ENCODE measurements at regions of chr19 and their contacts with region 1.

Region 1: DNA sequence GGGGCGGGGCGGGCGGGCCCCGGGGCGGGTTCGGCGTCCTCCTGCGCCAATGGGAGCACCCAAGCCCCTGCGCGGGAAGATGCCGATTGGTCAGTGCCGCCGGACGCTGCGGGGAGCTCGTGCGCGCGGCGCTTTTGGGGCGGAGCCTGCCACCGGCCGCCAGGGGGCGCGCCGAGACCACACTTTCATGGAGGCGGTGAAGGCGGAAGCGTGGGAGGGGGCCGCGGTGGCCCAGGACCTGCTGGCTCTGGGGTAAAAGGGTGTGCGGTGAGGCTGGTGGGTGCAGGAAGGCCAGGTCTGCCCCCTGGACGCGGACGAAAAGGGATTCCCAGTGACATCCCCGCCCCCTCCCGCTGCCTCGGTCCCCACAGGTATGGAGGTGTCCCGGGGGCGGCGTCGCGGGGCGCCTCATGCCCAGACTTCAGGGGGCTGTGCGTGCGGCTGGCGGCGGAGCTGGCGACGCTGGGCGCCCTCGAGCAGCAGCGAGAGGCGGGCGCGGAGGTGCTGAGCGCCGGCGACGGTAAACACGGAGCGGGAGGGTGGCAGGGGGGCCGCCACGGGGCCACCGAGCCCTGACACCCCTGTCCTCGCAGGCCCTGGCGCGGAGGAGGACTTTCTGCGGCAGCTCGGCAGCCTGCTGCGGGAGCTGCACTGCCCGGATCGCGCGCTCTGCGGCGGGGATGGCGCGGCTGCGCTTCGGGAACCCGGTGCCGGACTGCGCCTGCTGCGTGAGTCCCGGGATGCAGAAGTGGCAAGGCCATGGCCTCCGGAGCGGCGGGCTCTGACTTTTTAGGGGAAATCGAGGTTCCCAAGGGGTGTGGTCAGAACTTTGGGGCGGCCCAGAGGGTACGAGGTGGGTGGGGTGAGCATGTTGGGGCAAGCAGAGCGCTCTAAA is at the start of gene FAM98C:
- DNase-seq: peak; percentile 96
- ATAC-seq: peak; percentile 99
- H3K4me3 Mint-ChIP-seq: peak within 1 kb of the TSS; percentile 84
- H3K27ac Mint-ChIP-seq: peak within 1 kb of the TSS; percentile 93
- H3K4me1 Mint-ChIP-seq: peaks cover 26% of the 10 kb centered on the region
- H3K27me3 Mint-ChIP-seq: peaks cover 5% of the 10 kb centered on the region
- total RNA-seq, gene FAM98C: 21.0 to 25.9 TPM

Region 2: GRCh38 chr19:38351865-38352395 is 51.3 kb before region 1 on chr19:
- CTCF ChIA-PET with region 1: no interaction called
- POLR2A ChIA-PET with region 1: no interaction called
- DNase-seq: no peak
- ATAC-seq: peak; percentile 15
- H3K4me3 Mint-ChIP-seq: no peak overlapping the region
- H3K27ac Mint-ChIP-seq: no peak overlapping the region
- H3K4me1 Mint-ChIP-seq: no peaks in the 10 kb centered on the region
- H3K27me3 Mint-ChIP-seq: peaks cover 4% of the 10 kb centered on the region

Region 3: DNA sequence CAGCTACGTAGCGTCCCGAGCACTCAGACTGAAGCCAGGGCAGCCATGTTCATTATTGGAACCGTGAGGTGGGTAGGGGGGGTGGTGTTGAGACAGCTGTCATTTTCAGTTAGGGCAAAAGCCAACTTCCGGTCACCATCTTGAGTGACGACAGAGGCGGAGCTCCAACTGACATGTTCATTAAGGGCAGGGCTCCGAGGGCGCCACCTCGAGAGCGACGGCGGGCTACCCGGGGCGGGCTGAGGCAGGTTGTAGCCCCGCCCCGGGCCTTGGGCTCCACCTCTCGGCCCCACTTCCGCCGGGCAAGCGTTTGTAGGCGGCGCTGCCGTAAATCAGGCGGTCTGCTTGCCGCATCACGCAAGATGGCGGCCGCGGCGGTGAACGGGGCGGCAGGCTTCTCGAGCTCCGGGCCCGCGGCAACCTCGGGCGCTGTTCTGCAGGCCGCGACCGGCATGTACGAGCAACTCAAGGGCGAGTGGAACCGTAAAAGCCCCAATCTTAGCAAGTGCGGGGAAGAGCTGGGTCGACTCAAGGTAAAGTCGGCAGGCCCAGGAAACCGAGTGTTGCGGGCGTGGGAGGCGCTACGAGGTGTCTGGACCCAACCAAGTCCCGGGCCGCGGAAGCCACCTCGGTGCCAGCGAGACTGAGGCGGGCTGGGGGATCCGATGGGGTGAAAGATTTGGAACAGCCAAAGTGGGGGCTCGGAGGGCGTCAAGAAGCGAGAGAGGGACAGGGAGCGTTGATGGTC is 28.6 kb before region 1 on chr19 and contains the start of gene PSMD8:
- CTCF ChIA-PET with region 1: interaction called, 32 read pairs
- POLR2A ChIA-PET with region 1: interaction called, 9 read pairs
- DNase-seq: peak; percentile 99
- ATAC-seq: peak; percentile 98
- H3K4me3 Mint-ChIP-seq: peak within 1 kb of the TSS; percentile 100
- H3K27ac Mint-ChIP-seq: peak within 1 kb of the TSS; percentile 99
- H3K4me1 Mint-ChIP-seq: peaks cover 22% of the 10 kb centered on the region
- H3K27me3 Mint-ChIP-seq: peaks cover 4% of the 10 kb centered on the region
- total RNA-seq, gene PSMD8: 173 to 187 TPM

Region 4: GRCh38 chr19:38417544-38418506 is 14.6 kb after region 1 on chr19:
- CTCF ChIA-PET with region 1: interaction called, 25 read pairs
- POLR2A ChIA-PET with region 1: interaction called, 7 read pairs
- DNase-seq: peak; percentile 79
- ATAC-seq: peak; percentile 85
- H3K4me3 Mint-ChIP-seq: peak overlapping the region; percentile 74
- H3K27ac Mint-ChIP-seq: peak overlapping the region; percentile 78
- H3K4me1 Mint-ChIP-seq: peaks cover 22% of the 10 kb centered on the region
- H3K27me3 Mint-ChIP-seq: peaks cover 4% of the 10 kb centered on the region

Region 5: DNA sequence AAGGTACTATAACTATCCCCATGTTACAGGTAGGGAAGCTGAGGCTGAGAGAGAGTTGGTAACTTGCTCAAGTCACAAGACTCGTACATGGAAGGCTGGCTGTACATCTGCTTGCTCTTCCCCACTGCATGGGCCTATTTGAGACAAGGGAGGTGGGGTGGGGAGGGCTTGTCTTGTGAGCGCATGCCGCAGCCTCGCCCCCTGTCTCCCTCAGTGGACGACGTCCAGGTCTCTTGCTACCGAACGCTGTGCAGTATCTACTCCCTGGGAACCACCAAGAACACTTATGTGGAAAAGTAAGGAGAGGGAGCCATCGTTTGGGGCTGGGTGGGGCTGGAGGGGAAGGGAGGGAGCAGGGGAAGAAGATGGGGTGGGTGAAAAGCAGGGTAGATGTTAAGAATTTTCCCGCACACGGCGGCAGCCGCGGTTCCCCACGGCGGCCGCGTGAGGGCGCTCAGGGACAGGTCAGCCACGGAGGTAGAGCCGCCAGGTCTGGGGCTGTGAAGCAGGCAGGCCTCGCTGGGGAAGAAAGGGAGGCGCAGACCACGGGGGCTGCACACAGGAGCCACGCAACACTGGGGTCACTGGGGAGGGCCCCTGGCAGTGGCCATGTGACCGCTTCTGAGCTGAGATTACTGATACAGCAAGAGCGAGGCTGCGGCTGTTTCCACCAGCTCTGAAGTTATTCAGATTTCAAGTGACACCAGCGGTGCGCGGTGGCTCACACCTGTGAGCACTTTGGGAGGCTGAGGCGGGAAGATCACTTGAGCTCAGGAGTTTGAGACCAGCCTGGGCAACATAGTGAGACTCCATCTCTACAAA is 111.8 kb after region 1 on chr19:
- CTCF ChIA-PET with region 1: interaction called, 46 read pairs
- POLR2A ChIA-PET with region 1: interaction called, 3 read pairs
- DNase-seq: peak; percentile 81
- ATAC-seq: peak; percentile 81
- H3K4me3 Mint-ChIP-seq: peak overlapping the region; percentile 8
- H3K27ac Mint-ChIP-seq: peak overlapping the region; percentile 49
- H3K4me1 Mint-ChIP-seq: peaks cover 30% of the 10 kb centered on the region
- H3K27me3 Mint-ChIP-seq: peaks cover 22% of the 10 kb centered on the region

Region 6: DNA sequence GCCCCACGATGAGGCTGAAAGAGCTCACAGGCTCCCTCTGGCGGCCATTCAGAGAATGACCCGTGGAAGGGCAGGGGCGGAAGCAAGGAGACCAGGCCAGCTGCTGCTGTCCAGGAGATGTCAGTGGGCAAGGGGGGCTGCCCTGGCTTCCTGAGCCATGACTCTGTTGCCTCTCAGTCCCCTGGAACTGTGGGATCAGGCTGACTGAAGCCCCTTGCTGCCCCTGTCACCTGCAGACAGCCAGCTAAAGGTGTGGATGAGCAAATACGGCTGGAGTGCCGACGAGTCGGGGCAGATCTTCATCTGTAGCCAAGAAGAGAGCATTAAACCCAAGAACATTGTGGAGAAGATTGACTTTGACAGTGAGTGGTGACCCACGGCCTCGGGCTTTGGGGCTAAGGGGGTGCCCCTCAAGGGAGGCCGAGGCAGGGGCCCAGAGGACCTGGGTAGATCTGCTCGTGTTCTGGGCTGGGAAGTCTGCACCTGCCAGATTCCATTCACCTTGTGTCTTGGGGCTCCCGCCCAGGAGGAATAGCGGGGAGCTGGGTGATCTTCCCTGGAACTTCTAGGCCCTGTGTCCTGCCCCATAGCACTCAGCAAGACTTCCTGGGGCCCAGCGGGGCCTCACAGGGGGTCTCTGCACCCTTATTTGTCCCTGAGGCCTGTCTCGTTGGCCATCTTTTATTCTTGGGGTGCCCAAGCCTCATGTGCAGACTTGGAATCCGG is 231.7 kb after region 1 on chr19:
- CTCF ChIA-PET with region 1: interaction called, 57 read pairs
- POLR2A ChIA-PET with region 1: no interaction called
- DNase-seq: peak; percentile 81
- ATAC-seq: peak; percentile 21
- H3K4me3 Mint-ChIP-seq: no peak overlapping the region
- H3K27ac Mint-ChIP-seq: peak overlapping the region; percentile 83
- H3K4me1 Mint-ChIP-seq: peaks cover 36% of the 10 kb centered on the region
- H3K27me3 Mint-ChIP-seq: no peaks in the 10 kb centered on the region

Region 7: DNA sequence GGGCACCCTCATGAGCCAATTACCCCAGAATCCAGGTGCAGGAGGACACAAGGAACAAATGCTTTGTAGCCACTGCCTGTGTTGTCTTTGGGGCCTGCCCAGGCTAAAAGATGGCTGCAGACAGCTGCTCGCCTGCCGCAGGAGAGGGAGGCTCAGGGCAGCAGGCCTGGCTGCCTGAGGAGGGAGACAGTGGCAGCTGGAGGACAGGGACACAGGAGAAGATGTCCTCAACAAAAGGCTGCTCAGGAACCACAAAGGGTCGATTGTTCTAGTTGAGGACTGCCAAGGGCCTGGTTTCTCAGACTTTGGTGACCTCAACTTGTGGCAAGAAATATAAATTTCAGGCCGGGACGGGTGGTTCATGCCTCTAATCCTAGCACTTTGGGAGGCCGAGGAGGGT is 488.6 kb after region 1 on chr19:
- CTCF ChIA-PET with region 1: interaction called, 17 read pairs
- POLR2A ChIA-PET with region 1: interaction called, 5 read pairs
- DNase-seq: no peak
- ATAC-seq: no peak
- H3K4me3 Mint-ChIP-seq: no peak overlapping the region
- H3K27ac Mint-ChIP-seq: no peak overlapping the region
- H3K4me1 Mint-ChIP-seq: peaks cover 4% of the 10 kb centered on the region
- H3K27me3 Mint-ChIP-seq: no peaks in the 10 kb centered on the region